ENCODE measurements at regions of chr11 and their contacts with region 1.

Region 1: GRCh38 chr11:1515082-1516060 is 28.8 kb upstream of the MOB2 start:
- DNase-seq: peak; percentile 83
- H3K4me3 Mint-ChIP-seq: no peak overlapping the region
- H3K27ac Mint-ChIP-seq: no peak overlapping the region
- H3K4me1 Mint-ChIP-seq: peaks cover 60% of the 10 kb centered on the region
- H3K27me3 Mint-ChIP-seq: no peaks in the 10 kb centered on the region

Region 2: DNA sequence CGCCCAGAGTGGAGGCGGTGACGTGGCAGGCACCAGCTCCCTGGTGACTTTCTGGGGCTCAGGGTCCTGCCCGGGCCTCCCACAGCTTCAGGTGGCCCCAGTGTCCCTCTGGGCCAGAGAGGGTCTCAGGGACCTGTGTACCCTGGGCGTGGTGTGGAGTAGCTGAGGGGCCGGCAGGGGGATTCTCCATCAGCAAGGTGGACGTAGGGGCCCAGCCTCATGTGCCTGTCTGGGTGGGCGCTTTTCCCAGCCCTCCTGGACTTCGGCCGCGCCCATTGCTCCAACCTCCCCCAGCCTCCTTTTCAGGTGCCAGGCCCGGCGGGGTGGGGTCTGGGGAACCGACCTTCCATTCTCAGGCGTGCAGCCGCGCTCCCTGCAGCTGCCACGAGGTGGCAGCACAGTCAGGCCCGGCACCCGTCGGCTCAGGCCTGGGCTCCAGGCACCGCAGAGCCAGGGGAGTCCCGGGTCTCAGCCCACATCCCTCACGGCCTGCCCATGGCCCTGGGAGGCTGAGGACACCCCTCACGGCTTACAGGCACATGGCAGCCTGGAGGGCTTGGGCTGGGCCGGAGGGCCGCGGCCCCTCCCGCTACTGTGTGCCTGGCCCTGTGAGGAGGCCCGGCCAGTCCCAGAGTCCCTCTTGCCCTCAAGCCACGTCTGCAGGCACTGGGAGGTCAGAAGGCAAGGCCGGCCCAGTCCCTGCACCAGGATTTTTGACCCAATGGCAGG is 312.4 kb before region 1 on chr11:
- CTCF ChIA-PET with region 1: interaction called, 16 read pairs
- POLR2A ChIA-PET with region 1: no interaction called
- intact Hi-C with region 1: loop called (anchors 2 kb)
- DNase-seq: peak; percentile 73
- H3K4me3 Mint-ChIP-seq: no peak overlapping the region
- H3K27ac Mint-ChIP-seq: no peak overlapping the region
- H3K4me1 Mint-ChIP-seq: no peaks in the 10 kb centered on the region
- H3K27me3 Mint-ChIP-seq: no peaks in the 10 kb centered on the region

Region 3: DNA sequence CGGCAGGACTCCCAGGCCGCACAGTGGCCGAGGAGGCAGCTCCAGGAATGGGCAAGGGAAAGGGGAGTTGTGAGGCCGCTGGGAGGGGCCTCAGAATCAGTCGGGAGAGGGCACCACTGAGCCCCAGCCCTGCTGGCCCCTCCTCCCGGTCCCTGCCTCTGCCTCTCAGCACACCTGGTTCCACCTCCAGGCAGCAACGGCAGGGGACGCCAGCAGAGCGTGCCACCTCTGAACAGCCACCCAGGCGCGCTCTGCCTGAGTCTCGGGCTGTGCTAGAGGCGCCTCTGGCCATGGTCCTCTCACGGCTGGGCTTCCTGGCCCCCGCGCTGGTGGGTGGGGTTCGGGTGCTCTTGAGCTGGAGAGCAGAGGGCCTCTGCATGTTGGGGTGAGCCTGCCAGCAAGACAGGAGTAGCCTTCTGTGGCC is 61.7 kb before region 1 on chr11:
- CTCF ChIA-PET with region 1: interaction called, 7 read pairs
- POLR2A ChIA-PET with region 1: no interaction called
- intact Hi-C with region 1: loop called (anchors 2 kb)
- DNase-seq: peak; percentile 83
- H3K4me3 Mint-ChIP-seq: no peak overlapping the region
- H3K27ac Mint-ChIP-seq: no peak overlapping the region
- H3K4me1 Mint-ChIP-seq: no peaks in the 10 kb centered on the region
- H3K27me3 Mint-ChIP-seq: no peaks in the 10 kb centered on the region

Region 4: DNA sequence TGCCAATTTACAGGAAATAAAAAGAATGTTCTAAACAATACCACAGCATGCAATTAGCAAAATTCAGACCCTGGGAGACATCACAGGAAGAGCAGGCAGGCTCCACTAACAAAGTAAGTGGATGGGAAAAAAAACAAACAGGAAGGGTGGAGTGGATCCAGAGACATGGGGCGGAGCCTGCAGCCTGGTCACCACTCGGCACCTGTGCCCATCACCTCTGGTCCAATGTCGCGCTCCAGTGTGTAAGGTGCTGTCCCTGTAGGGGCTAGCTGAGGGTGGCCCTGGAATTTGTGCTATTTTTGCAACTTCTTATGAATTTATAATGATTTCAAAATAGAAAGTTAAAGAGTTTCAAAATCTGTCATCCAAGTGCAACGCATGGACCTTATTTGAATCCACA is 17.8 kb before region 1 on chr11:
- CTCF ChIA-PET with region 1: interaction called, 20 read pairs
- POLR2A ChIA-PET with region 1: no interaction called
- intact Hi-C with region 1: no loop called
- DNase-seq: peak; percentile 31
- H3K4me3 Mint-ChIP-seq: no peak overlapping the region
- H3K27ac Mint-ChIP-seq: peak overlapping the region; percentile 46
- H3K4me1 Mint-ChIP-seq: peaks cover 63% of the 10 kb centered on the region
- H3K27me3 Mint-ChIP-seq: no peaks in the 10 kb centered on the region

Region 5: GRCh38 chr11:1526785-1527184 is 11.4 kb after region 1 on chr11:
- CTCF ChIA-PET with region 1: interaction called, 14 read pairs
- POLR2A ChIA-PET with region 1: no interaction called
- intact Hi-C with region 1: no loop called
- DNase-seq: no peak
- H3K4me3 Mint-ChIP-seq: no peak overlapping the region
- H3K27ac Mint-ChIP-seq: no peak overlapping the region
- H3K4me1 Mint-ChIP-seq: peaks cover 34% of the 10 kb centered on the region
- H3K27me3 Mint-ChIP-seq: no peaks in the 10 kb centered on the region

Region 6: GRCh38 chr11:1939006-1939625 is 423.7 kb after region 1 on chr11:
- CTCF ChIA-PET with region 1: no interaction called
- POLR2A ChIA-PET with region 1: no interaction called
- intact Hi-C with region 1: no loop called
- DNase-seq: no peak
- H3K4me3 Mint-ChIP-seq: no peak overlapping the region
- H3K27ac Mint-ChIP-seq: no peak overlapping the region
- H3K4me1 Mint-ChIP-seq: peaks cover 4% of the 10 kb centered on the region
- H3K27me3 Mint-ChIP-seq: no peaks in the 10 kb centered on the region

Measured in activated CD4-positive, alpha-beta memory T cell treated with anti-CD3 and anti-CD28 coated beads for 36 hours (primary cell).